Caco-2 (cell line): ENCODE measurements at regions of chr7 and their contacts with region 1.

Region 1: DNA sequence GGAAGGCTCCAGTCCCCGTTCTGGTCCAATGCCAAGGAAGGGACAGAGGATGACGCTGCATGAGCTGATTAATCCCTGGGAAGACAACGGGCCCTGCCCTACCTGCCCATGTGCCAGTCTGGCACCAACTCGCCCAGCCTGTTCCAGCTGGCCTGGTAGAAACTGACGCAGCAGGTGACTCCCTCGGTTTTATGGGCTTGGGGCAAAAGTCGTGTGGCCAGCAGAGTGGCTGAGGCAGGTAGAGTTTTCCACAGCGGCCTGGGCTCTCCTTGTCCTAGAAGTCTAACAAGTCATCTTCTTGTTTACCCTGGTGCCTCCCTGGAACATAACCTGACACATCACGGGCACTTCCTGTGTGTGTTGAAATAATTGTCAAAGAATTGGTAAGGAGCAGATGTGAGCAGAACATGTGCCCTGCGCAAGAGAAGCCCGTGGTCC is 20.4 kb upstream of the LMTK2 start:
- DNase-seq: no peak
- H3K4me3 ChIP-seq: no peak overlapping the region
- H3K4me3 Mint-ChIP-seq: no peak overlapping the region
- H3K27ac Mint-ChIP-seq: no peak overlapping the region
- H3K4me1 ChIP-seq: peaks cover 13% of the 10 kb centered on the region
- H3K4me1 Mint-ChIP-seq: peaks cover 13% of the 10 kb centered on the region
- H3K27me3 ChIP-seq: no peaks in the 10 kb centered on the region
- H3K27me3 Mint-ChIP-seq: no peaks in the 10 kb centered on the region
- CTCF ChIP-seq: no peak

Region 2: DNA sequence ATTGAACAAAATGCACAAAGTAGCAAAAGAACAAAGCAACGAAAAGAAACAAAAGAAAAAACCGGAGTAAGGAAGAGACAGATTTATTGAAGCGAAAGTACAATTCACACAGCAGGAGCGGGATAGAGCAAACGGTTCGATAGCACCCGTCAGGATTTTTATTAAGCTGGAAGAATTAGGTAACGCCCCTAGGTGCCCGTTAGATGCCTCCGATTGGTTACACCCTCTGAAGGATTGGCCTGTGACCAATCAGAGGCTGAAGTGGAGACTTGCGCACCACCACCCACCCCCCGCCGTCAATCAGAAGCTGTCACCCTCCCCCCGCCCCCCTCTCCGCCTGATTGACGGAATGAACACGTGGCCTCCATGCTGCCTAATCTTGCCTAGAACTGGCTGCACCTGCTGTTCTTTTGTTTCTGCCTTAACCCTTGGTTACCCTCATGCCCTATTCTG is 113.1 kb before region 1 on chr7:
- CTCF ChIA-PET with region 1: no interaction called
- POLR2A ChIA-PET with region 1: no interaction called
- intact Hi-C with region 1: no loop called
- DNase-seq: peak; percentile 17 to 63
- H3K4me3 ChIP-seq: no peak overlapping the region
- H3K4me3 Mint-ChIP-seq: peak overlapping the region; percentile 96
- H3K27ac Mint-ChIP-seq: no peak overlapping the region
- H3K4me1 ChIP-seq: no peaks in the 10 kb centered on the region
- H3K4me1 Mint-ChIP-seq: peaks cover 7% of the 10 kb centered on the region
- H3K27me3 ChIP-seq: no peaks in the 10 kb centered on the region
- H3K27me3 Mint-ChIP-seq: no peaks in the 10 kb centered on the region
- CTCF ChIP-seq: no peak

Region 3: GRCh38 chr7:98795741-98796493 is 709.6 kb after region 1 on chr7:
- CTCF ChIA-PET with region 1: no interaction called
- POLR2A ChIA-PET with region 1: no interaction called
- intact Hi-C with region 1: loop called (anchors 10 kb)
- DNase-seq: no peak
- H3K4me3 ChIP-seq: no peak overlapping the region
- H3K4me3 Mint-ChIP-seq: no peak overlapping the region
- H3K27ac Mint-ChIP-seq: no peak overlapping the region
- H3K4me1 ChIP-seq: no peaks in the 10 kb centered on the region
- H3K4me1 Mint-ChIP-seq: no peaks in the 10 kb centered on the region
- H3K27me3 ChIP-seq: no peaks in the 10 kb centered on the region
- H3K27me3 Mint-ChIP-seq: no peaks in the 10 kb centered on the region
- CTCF ChIP-seq: no peak